ENCODE measurements at regions of chr1 and their contacts with region 1.

Region 1: GRCh38 chr1:25487628-25488027 is 55.8 kb upstream of the LDLRAP1 start:
- DNase-seq: peak in 2 of 3 donors; percentile 50 to 55
- H3K4me3 ChIP-seq: no peak overlapping the region
- H3K27ac ChIP-seq: no peak overlapping the region
- H3K4me1 ChIP-seq: peaks cover 11 to 15% (median 13%) of the 10 kb centered on the region in 4 experiments
- H3K27me3 ChIP-seq: no peaks in the 10 kb centered on the region

Region 2: GRCh38 chr1:25469177-25469576 is 18.5 kb before region 1 on chr1:
- CTCF ChIA-PET with region 1: interaction called, 10 read pairs
- POLR2A ChIA-PET with region 1: no interaction called
- DNase-seq: no peak
- H3K4me3 ChIP-seq: no peak overlapping the region
- H3K27ac ChIP-seq: no peak overlapping the region
- H3K4me1 ChIP-seq: peaks cover 0 to 21% (median 7%) of the 10 kb centered on the region in 4 experiments
- H3K27me3 ChIP-seq: no peaks in the 10 kb centered on the region

Region 3: GRCh38 chr1:25476186-25477097 is 11.2 kb before region 1 on chr1:
- CTCF ChIA-PET with region 1: interaction called, 20 read pairs
- POLR2A ChIA-PET with region 1: no interaction called
- DNase-seq: no peak
- H3K4me3 ChIP-seq: no peak overlapping the region
- H3K27ac ChIP-seq: no peak overlapping the region
- H3K4me1 ChIP-seq: peaks cover 2 to 28% (median 9%) of the 10 kb centered on the region in 4 experiments
- H3K27me3 ChIP-seq: no peaks in the 10 kb centered on the region

Region 4: DNA sequence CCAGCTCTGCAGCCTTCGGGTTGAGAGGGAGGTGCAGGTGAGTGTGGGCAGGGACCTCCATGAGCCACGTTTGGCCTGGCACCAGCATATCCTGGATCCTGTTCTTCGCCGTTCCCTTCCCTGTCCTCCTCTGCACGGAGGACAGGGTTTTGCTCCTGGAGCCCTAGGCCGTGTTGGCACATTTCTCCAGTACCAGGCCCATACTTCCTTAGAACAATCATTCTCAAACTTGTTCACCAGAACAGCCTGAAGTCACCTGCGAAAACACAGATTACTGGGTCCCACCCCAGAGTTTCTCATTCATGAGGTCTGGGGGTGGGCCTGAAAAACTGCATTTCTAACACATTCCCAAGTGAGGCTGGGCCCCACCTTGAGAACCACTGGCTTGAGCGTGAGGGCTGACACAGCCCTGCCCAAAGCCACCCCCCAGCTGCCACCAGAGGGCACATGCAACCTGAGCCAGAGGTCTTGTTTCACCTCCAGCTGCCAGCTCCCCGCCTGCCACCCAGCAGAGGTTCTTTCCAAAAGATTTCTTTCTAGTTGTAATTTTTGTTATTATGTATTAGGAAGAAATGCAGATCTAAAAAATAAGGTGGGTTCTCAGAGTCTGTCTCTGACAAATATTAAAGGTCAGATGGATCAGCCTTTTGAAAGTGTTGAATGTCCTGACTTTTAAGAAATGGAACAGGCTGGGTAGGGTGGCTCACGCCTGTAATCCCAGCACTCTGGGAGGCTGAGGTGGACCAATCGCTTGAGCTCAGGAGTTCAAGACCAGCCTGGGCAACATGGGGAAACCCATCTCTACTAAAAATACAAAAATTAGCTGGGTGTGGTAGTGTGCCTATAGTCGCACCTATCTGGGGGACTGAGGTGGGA is 16.2 kb after region 1 on chr1:
- CTCF ChIA-PET with region 1: interaction called, 16 read pairs
- POLR2A ChIA-PET with region 1: no interaction called
- DNase-seq: peak; percentile 53 to 76 (median 73)
- H3K4me3 ChIP-seq: no peak overlapping the region
- H3K27ac ChIP-seq: no peak overlapping the region
- H3K4me1 ChIP-seq: peaks cover 2 to 17% (median 12%) of the 10 kb centered on the region in 4 experiments
- H3K27me3 ChIP-seq: no peaks in the 10 kb centered on the region